CD8-positive, alpha-beta T cell (primary cell): ENCODE measurements at regions of chr6 and their contacts with region 1.

Region 1: GRCh38 chr6:90559931-90560330 is 26.9 kb downstream of the MAP3K7 start:
- DNase-seq: peak in 4 of 9 experiments; percentile 2 to 33 (median 16)
- ATAC-seq: no peak
- H3K4me3 ChIP-seq: no peak overlapping the region
- H3K4me3 Mint-ChIP-seq: no peak overlapping the region
- H3K27ac ChIP-seq: peak overlapping the region in 1 of 2 experiments; percentile 37
- H3K27ac Mint-ChIP-seq: no peak overlapping the region
- H3K4me1 ChIP-seq: peaks cover 16% of the 10 kb centered on the region
- H3K4me1 Mint-ChIP-seq: peaks cover 30% of the 10 kb centered on the region
- H3K27me3 ChIP-seq: no peaks in the 10 kb centered on the region
- H3K27me3 Mint-ChIP-seq: no peaks in the 10 kb centered on the region
- CTCF ChIP-seq: no peak

Region 2: GRCh38 chr6:90525421-90525820 is 34.5 kb before region 1 on chr6:
- CTCF ChIA-PET with region 1: no interaction called
- POLR2A ChIA-PET with region 1: no interaction called
- intact Hi-C with region 1: loop called in 1 of 2 experiments (anchors 5 kb)
- DNase-seq: no peak
- ATAC-seq: no peak
- H3K4me3 ChIP-seq: no peak overlapping the region
- H3K4me3 Mint-ChIP-seq: no peak overlapping the region
- H3K27ac ChIP-seq: no peak overlapping the region
- H3K27ac Mint-ChIP-seq: no peak overlapping the region
- H3K4me1 ChIP-seq: no peaks in the 10 kb centered on the region
- H3K4me1 Mint-ChIP-seq: no peaks in the 10 kb centered on the region
- H3K27me3 ChIP-seq: no peaks in the 10 kb centered on the region
- H3K27me3 Mint-ChIP-seq: no peaks in the 10 kb centered on the region
- CTCF ChIP-seq: no peak